CD8-positive, alpha-beta memory T cell (primary cell): ENCODE measurements at regions of chr12 and their contacts with region 1.

Region 1: DNA sequence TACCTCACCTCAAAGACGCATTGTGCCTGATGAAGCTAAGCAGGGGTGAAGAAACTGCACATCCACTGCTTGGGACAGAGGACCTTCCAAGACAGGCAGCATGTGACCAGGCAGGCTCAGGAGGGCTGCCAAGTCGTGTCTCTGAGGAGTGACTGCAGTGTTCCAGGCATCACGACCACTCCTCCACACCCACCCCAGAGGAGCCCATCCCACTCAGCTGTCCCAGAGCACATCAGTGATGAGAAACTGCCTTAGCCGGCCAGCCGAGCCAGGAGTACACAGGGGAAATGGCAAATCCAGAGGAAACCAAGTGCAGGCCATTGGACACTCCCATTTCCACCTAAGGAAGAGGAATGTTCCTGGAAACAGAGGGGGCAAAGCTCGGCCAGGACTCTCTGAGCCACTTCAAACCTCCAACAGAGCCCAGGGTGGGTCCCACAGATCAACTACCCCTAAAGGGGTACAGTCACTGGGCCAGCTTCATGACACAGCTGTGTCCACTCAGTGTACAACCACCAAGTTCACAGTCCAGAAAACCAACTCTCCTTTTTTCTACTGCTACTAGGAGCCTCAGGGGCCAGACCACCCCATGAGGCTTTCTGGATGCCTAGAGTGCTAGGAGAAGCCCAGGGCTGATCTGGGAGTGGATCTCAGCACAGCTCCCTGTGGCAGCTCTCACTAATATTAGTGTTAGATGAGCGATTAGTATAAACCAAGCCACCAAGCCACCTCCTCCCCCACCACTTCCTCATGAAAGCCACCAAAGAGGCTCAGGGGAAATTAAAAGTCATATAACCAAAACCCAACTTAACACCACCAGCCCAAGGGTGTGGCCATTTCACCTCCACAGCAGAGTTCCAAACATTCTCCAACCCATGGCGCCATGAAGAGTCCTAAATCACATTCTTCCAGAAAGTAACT is 15.4 kb downstream of the PXN start:
- DNase-seq: peak in 4 of 5 donors; percentile 29 to 69 (median 48)
- H3K4me3 ChIP-seq: peak overlapping the region; percentile 56
- H3K4me3 Mint-ChIP-seq: peak overlapping the region; percentile 49 to 93 (median 80)
- H3K27ac ChIP-seq: peak overlapping the region; percentile 41
- H3K27ac Mint-ChIP-seq: peak overlapping the region; percentile 80 to 97 (median 95)
- H3K4me1 ChIP-seq: peaks cover 85% of the 10 kb centered on the region
- H3K4me1 Mint-ChIP-seq: peaks cover 77 to 91% (median 89%) of the 10 kb centered on the region in 3 donors
- H3K27me3 ChIP-seq: no peaks in the 10 kb centered on the region
- H3K27me3 Mint-ChIP-seq: no peaks in the 10 kb centered on the region

Region 2: GRCh38 chr12:120167529-120168095 is 82.5 kb before region 1 on chr12:
- CTCF ChIA-PET with region 1: no interaction called
- POLR2A ChIA-PET with region 1: interaction called, 10 read pairs
- DNase-seq: no peak
- H3K4me3 ChIP-seq: no peak overlapping the region
- H3K4me3 Mint-ChIP-seq: no peak overlapping the region
- H3K27ac ChIP-seq: no peak overlapping the region
- H3K27ac Mint-ChIP-seq: no peak overlapping the region
- H3K4me1 ChIP-seq: no peaks in the 10 kb centered on the region
- H3K4me1 Mint-ChIP-seq: no peaks in the 10 kb centered on the region
- H3K27me3 ChIP-seq: no peaks in the 10 kb centered on the region
- H3K27me3 Mint-ChIP-seq: no peaks in the 10 kb centered on the region

Region 3: DNA sequence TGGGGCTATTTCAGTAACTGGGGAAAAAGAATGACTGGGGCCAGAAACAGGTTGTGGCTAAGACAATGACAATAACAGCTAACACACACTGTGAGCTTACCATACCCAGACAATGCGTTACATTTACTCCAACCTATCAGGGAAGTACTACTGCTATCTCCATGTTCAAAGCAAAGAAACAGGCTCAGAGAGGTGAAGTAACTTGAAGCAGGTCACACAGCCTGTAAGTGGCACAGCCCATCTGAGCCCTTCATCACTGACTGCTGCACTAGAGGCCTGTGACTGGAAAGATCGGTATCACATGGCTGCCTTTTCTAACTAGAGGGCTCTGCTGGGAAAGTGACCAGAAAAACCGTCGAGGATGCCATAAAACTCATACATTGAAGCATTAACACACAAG is 63.5 kb before region 1 on chr12:
- CTCF ChIA-PET with region 1: no interaction called
- POLR2A ChIA-PET with region 1: no interaction called
- DNase-seq: no peak
- H3K4me3 ChIP-seq: no peak overlapping the region
- H3K4me3 Mint-ChIP-seq: no peak overlapping the region
- H3K27ac ChIP-seq: no peak overlapping the region
- H3K27ac Mint-ChIP-seq: peak overlapping the region in 2 of 8 donors; percentile 8 to 15
- H3K4me1 ChIP-seq: no peaks in the 10 kb centered on the region
- H3K4me1 Mint-ChIP-seq: peaks cover 12 to 37% (median 33%) of the 10 kb centered on the region in 3 donors
- H3K27me3 ChIP-seq: no peaks in the 10 kb centered on the region
- H3K27me3 Mint-ChIP-seq: no peaks in the 10 kb centered on the region

Region 4: DNA sequence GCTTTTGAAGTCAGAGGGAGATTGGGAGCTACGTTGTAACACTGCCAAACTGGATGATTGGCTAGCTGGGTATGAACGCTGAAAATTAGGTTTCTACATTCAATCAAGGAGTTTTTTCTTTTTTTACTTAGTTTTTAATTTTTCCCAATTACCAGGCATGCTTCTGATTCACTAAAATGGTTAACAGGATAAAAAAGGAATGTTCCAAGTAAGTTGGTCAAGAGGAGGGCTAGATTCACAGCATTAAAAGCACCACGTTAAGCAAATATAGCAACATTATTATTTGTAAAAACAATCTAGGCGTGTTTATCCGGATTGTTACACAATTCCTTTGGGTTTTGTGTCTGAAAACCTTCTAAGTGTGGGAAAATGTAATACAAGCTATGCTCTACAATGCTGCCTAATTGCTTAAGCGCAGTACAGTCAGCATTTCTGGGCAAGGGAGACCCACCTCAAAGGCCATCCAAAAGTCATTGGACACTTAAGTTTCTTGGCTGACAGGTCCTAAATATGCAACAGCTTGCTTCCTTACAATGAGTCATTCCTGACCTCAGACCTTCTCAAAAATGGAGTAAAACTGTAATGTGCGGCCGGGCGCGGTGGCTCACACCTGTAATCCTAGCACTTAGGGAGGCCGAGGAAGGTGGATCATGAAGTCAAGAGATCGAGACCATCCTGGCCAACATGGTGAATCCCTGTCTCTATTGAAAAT is 50.4 kb before region 1 on chr12:
- CTCF ChIA-PET with region 1: interaction called, 10 read pairs
- POLR2A ChIA-PET with region 1: interaction called, 8 read pairs
- DNase-seq: peak in 2 of 5 donors; percentile 14 to 23
- H3K4me3 ChIP-seq: peak overlapping the region; percentile 99
- H3K4me3 Mint-ChIP-seq: peak overlapping the region; percentile 85 to 99 (median 98)
- H3K27ac ChIP-seq: peak overlapping the region; percentile 86
- H3K27ac Mint-ChIP-seq: peak overlapping the region; percentile 89 to 99 (median 96)
- H3K4me1 ChIP-seq: peaks cover 46% of the 10 kb centered on the region
- H3K4me1 Mint-ChIP-seq: peaks cover 36 to 51% (median 44%) of the 10 kb centered on the region in 3 donors
- H3K27me3 ChIP-seq: no peaks in the 10 kb centered on the region
- H3K27me3 Mint-ChIP-seq: peaks cover 0 to 1% of the 10 kb centered on the region in 2 donors

Region 5: DNA sequence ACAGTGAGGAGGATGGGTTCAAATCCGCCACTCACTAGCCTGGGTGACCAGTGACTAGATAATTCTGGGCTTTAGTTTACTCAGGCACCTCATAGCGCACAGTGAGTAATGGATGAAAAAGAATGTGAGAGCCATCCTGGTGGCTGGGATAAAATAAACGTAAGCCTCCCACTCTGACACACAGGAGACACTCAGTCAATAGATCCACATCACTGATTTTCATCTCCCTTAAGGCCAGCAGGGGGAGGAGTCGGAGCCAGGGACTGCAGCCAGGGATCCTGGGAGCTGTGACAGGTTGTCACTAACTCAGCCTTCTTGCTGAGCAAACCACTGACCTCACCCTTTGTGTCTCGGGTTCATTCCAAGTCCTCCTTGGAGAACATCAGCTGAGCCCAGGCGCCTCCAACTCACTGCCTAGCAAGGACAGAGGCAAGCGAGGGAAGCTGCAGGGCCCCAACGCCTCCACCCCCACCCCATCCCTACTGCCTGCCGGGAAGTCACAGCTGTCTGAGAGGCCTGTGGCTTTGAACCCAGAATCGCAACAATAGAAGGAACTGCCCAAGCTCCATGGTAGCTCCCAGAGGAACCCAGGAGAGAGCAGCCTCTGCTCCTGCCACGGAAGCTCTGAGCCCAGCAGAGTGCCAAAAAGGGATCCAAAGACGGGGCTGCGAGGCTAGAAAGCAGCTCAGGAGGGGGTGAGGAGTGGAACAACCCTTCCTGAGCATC is 15.3 kb before region 1 on chr12:
- CTCF ChIA-PET with region 1: interaction called, 727 read pairs
- POLR2A ChIA-PET with region 1: interaction called, 28 read pairs
- DNase-seq: no peak
- H3K4me3 ChIP-seq: no peak overlapping the region
- H3K4me3 Mint-ChIP-seq: peak overlapping the region in 2 of 7 donors; percentile 12 to 34
- H3K27ac ChIP-seq: peak overlapping the region; percentile 45
- H3K27ac Mint-ChIP-seq: peak overlapping the region in 7 of 8 donors; percentile 37 to 94 (median 84)
- H3K4me1 ChIP-seq: peaks cover 94% of the 10 kb centered on the region
- H3K4me1 Mint-ChIP-seq: peaks cover 82 to 90% (median 84%) of the 10 kb centered on the region in 3 donors
- H3K27me3 ChIP-seq: no peaks in the 10 kb centered on the region
- H3K27me3 Mint-ChIP-seq: no peaks in the 10 kb centered on the region

Region 6: GRCh38 chr12:120265473-120266179 is 15.5 kb after region 1 on chr12 and contains the start of gene PXN:
- CTCF ChIA-PET with region 1: interaction called, 146 read pairs
- POLR2A ChIA-PET with region 1: interaction called, 96 read pairs
- DNase-seq: peak; percentile 87 to 95 (median 90)
- H3K4me3 ChIP-seq: peak within 1 kb of the TSS; percentile 97
- H3K4me3 Mint-ChIP-seq: peak within 1 kb of the TSS; percentile 82 to 98 (median 94)
- H3K27ac ChIP-seq: peak within 1 kb of the TSS; percentile 82
- H3K27ac Mint-ChIP-seq: peak within 1 kb of the TSS; percentile 85 to 98 (median 91)
- H3K4me1 ChIP-seq: peaks cover 44% of the 10 kb centered on the region
- H3K4me1 Mint-ChIP-seq: peaks cover 41 to 48% (median 42%) of the 10 kb centered on the region in 3 donors
- H3K27me3 ChIP-seq: no peaks in the 10 kb centered on the region
- H3K27me3 Mint-ChIP-seq: peaks cover 0 to 2% of the 10 kb centered on the region in 2 donors
- total RNA-seq, gene PXN: 33.7 to 35.9 TPM

Region 7: GRCh38 chr12:120421701-120422100 is 171.6 kb after region 1 on chr12:
- CTCF ChIA-PET with region 1: no interaction called
- POLR2A ChIA-PET with region 1: no interaction called
- DNase-seq: no peak
- H3K4me3 ChIP-seq: no peak overlapping the region
- H3K4me3 Mint-ChIP-seq: no peak overlapping the region
- H3K27ac ChIP-seq: no peak overlapping the region
- H3K27ac Mint-ChIP-seq: no peak overlapping the region
- H3K4me1 ChIP-seq: no peaks in the 10 kb centered on the region
- H3K4me1 Mint-ChIP-seq: no peaks in the 10 kb centered on the region
- H3K27me3 ChIP-seq: no peaks in the 10 kb centered on the region
- H3K27me3 Mint-ChIP-seq: peaks cover 0 to 1% of the 10 kb centered on the region in 2 donors

Region 8: DNA sequence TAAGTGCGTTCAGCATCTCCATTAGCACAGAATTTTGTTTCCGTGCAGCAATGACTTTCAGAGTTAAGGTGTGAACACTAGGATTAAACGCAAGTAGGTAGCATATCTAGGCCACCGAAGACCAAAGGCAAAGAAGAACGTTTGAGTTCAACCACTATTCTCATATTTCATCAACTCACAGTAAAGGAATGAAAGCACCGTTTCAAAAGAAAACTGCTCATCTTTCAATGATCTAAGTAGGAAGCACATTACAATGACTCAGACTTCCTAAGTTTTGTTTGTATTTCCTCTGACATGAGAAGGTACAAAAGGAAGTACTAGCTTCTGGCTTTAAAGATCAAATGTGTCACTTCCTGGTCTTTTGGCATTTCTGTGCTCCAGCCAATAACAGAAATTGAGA is 533.1 kb after region 1 on chr12:
- CTCF ChIA-PET with region 1: no interaction called
- POLR2A ChIA-PET with region 1: interaction called, 13 read pairs
- DNase-seq: no peak
- H3K4me3 ChIP-seq: no peak overlapping the region
- H3K4me3 Mint-ChIP-seq: peak overlapping the region in 5 of 7 donors; percentile 18 to 70 (median 37)
- H3K27ac ChIP-seq: no peak overlapping the region
- H3K27ac Mint-ChIP-seq: peak overlapping the region in 7 of 8 donors; percentile 56 to 84 (median 77)
- H3K4me1 ChIP-seq: peaks cover 14% of the 10 kb centered on the region
- H3K4me1 Mint-ChIP-seq: peaks cover 30 to 47% (median 35%) of the 10 kb centered on the region in 3 donors
- H3K27me3 ChIP-seq: no peaks in the 10 kb centered on the region
- H3K27me3 Mint-ChIP-seq: no peaks in the 10 kb centered on the region